ENCODE measurements at regions of chr1 and their contacts with region 1.

Region 1: GRCh38 chr1:11719313-11720032 is 16.5 kb upstream of the AGTRAP start:
- DNase-seq: peak; percentile 84 to 93 (median 88)
- H3K4me3 ChIP-seq: peak overlapping the region; percentile 20 to 69 (median 49)
- H3K27ac ChIP-seq: peak overlapping the region in 27 of 59 donors; percentile 4 to 75 (median 40)
- H3K27me3 ChIP-seq: no peaks in the 10 kb centered on the region
- CTCF ChIP-seq: peak; percentile 91 to 99 (median 97)

Region 2: DNA sequence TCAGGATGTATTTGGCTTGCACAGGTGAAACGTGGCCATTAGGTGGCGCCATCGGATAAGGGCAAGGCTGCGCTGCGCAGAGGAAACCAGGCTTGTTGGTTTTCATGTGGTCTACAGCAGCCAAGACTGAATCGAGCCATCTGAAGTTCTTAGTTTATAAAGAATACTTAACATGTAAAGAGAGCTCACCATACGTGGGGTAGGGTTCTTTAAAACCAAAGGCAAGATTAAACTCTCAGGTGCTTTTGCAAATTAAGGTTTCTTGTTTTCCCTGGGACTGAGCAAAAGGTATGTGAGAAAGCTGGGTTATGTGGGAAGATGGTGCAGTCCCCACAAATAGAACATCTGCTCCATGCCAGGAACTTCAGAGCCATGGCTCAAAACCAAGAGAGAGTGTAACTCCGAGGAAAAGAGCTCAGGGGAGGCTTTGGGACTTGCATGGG is 681.7 kb before region 1 on chr1:
- intact Hi-C with region 1: loop called (anchors 10 kb)
- DNase-seq: peak; percentile 82 to 94 (median 88)
- H3K4me3 ChIP-seq: no peak overlapping the region
- H3K27ac ChIP-seq: peak overlapping the region in 1 of 59 donors; percentile 44
- H3K27me3 ChIP-seq: no peaks in the 10 kb centered on the region
- CTCF ChIP-seq: peak; percentile 75 to 99 (median 96)

Region 3: GRCh38 chr1:11248155-11248554 is 471.3 kb before region 1 on chr1:
- intact Hi-C with region 1: loop called in 1 of 2 experiments (anchors 10 kb)
- DNase-seq: no peak
- H3K4me3 ChIP-seq: no peak overlapping the region
- H3K27ac ChIP-seq: peak overlapping the region in 1 of 59 donors; percentile 10
- H3K27me3 ChIP-seq: no peaks in the 10 kb centered on the region
- CTCF ChIP-seq: no peak

Region 4: DNA sequence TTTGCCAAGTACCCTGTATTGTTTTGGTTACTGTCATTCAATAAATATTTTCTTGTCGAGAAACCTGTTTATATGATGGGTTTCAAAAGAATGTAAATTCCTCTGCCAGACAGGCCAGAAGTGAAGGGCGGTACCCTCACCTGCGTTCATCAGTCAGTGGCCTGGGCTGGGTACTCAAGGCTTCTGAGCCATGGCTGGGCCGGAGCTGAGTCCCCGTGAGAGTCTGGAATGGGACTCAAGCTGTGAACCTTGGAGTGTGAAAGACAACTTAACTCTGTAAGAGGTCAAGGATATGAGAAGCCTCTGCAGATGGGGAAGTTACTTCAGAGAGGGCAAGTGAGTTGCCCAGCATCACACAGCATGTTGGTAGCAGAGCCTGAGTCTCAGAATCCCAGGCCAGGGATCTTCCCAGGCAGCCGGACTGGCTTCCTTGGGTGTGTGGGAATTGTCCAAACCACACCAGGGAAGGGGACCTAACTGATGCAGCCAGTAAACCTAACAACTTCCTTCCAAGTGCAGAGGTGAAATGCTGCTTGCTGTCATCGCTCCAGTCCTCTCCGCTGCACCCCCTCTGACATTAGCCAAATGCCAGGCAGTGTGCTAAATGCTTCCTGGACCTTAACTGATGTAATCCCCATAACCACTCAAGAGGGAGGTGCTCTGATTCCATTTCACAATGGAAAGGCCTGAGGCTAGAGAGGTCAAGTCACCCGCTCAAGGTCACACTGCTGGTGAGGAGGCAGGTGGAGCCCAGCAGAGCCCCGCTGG is 235.7 kb before region 1 on chr1:
- intact Hi-C with region 1: loop called in 1 of 2 experiments (anchors 10 kb)
- DNase-seq: no peak
- H3K4me3 ChIP-seq: no peak overlapping the region
- H3K27ac ChIP-seq: no peak overlapping the region
- H3K27me3 ChIP-seq: peaks cover 0 to 37% (median 0%) of the 10 kb centered on the region in 45 donors
- CTCF ChIP-seq: no peak

Region 5: DNA sequence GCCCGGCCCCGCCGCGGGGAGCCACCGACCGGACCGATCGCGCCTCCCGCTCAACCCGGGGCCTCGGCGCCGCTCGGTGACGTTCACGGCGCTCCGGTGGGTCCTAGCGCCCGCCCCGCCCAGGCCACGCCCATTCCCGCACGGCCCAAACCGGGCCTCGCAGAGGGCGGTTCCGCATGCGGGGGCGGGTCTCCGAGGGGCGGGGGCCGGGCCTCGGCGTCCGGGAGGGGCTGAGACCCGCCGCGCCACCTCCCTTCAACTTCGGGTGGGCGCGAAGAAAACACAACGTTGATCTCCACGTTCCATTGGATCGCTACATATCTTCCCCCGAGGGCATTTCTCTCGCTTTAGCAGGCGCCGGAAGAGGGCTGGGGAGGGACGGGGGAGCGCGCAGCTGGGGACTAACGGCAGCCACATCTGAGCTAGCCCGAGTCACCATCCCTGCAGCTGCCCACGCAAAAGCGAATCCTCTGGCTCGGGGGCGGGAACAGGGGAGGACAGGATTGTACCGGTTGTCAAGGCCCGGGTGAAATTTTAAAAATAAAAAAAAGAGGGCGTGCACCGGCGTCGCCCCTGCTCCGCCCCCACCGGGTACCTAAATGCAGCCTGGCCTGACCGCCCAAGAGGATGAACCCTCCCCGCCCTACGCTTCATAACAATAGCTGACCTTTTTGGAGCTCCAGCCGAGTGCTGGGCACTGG is 38.3 kb before region 1 on chr1 and contains the start of gene MAD2L2:
- intact Hi-C with region 1: loop called in 1 of 2 experiments (anchors 5 kb)
- DNase-seq: peak; percentile 70 to 94 (median 85)
- H3K4me3 ChIP-seq: peak within 1 kb of the TSS; percentile 65 to 98 (median 92)
- H3K27ac ChIP-seq: peak within 1 kb of the TSS; percentile 33 to 96 (median 83)
- H3K27me3 ChIP-seq: no peaks in the 10 kb centered on the region
- CTCF ChIP-seq: peak in 12 of 56 donors; percentile 1 to 43 (median 19)
- total RNA-seq, gene MAD2L2: 15.8 to 42.3 (median 25.8) TPM